ENCODE measurements at regions of chr2 and their contacts with region 1.

Region 1: GRCh38 chr2:126657636-126658318 is 1.8 kb downstream of the GYPC start:
- DNase-seq: peak; percentile 40 to 79 (median 73)
- ATAC-seq: peak; percentile 72
- H3K4me3 ChIP-seq: peak overlapping the region; percentile 99
- H3K4me3 Mint-ChIP-seq: peak overlapping the region; percentile 88 to 100 (median 96)
- H3K27ac ChIP-seq: peak overlapping the region; percentile 98
- H3K27ac Mint-ChIP-seq: peak overlapping the region; percentile 93 to 100 (median 98)
- H3K4me1 ChIP-seq: peaks cover 41 to 59% of the 10 kb centered on the region in 2 donors
- H3K4me1 Mint-ChIP-seq: peaks cover 50 to 78% (median 63%) of the 10 kb centered on the region in 7 donors
- H3K27me3 ChIP-seq: no peaks in the 10 kb centered on the region
- H3K27me3 Mint-ChIP-seq: no peaks in the 10 kb centered on the region

Region 2: DNA sequence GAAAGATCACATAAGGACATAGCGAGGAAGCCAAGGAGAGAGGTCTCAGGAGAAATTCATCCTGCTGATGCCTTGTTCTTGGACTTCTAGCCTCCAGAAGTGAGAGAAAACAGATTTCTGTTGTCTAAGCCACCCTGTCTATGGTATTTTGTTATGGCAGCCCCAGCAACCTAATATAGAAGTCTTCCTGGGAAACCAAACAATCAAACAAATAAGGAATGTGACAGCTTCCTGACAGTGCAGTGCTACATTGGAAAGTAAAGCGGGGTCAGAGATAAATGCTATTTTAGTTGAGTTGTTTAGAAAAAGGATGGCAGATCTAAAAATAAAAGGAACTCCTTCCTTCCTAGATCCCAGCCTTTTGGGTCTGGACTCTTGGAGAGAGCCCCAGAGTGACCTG is 445.0 kb before region 1 on chr2:
- CTCF ChIA-PET with region 1: no interaction called
- POLR2A ChIA-PET with region 1: no interaction called
- intact Hi-C with region 1: no loop called
- DNase-seq: no peak
- ATAC-seq: no peak
- H3K4me3 ChIP-seq: no peak overlapping the region
- H3K4me3 Mint-ChIP-seq: no peak overlapping the region
- H3K27ac ChIP-seq: no peak overlapping the region
- H3K27ac Mint-ChIP-seq: no peak overlapping the region
- H3K4me1 ChIP-seq: no peaks in the 10 kb centered on the region
- H3K4me1 Mint-ChIP-seq: no peaks in the 10 kb centered on the region
- H3K27me3 ChIP-seq: no peaks in the 10 kb centered on the region
- H3K27me3 Mint-ChIP-seq: peaks cover 0 to 16% (median 11%) of the 10 kb centered on the region in 5 donors

Region 3: GRCh38 chr2:126634273-126634861 is 23.4 kb before region 1 on chr2:
- CTCF ChIA-PET with region 1: interaction called, 3 read pairs
- POLR2A ChIA-PET with region 1: interaction called, 9 read pairs
- intact Hi-C with region 1: loop called in 1 of 2 experiments (anchors 1 kb)
- DNase-seq: peak in 7 of 9 donors; percentile 12 to 35 (median 21)
- ATAC-seq: peak; percentile 50
- H3K4me3 ChIP-seq: no peak overlapping the region
- H3K4me3 Mint-ChIP-seq: no peak overlapping the region
- H3K27ac ChIP-seq: no peak overlapping the region
- H3K27ac Mint-ChIP-seq: peak overlapping the region in 1 of 9 donors; percentile 33
- H3K4me1 ChIP-seq: no peaks in the 10 kb centered on the region
- H3K4me1 Mint-ChIP-seq: peaks cover 0 to 10% (median 4%) of the 10 kb centered on the region in 7 donors
- H3K27me3 ChIP-seq: peaks cover 0 to 3% of the 10 kb centered on the region in 2 donors
- H3K27me3 Mint-ChIP-seq: peaks cover 0 to 51% (median 0%) of the 10 kb centered on the region in 5 donors

Region 4: GRCh38 chr2:126699716-126700581 is 42.2 kb after region 1 on chr2:
- CTCF ChIA-PET with region 1: no interaction called
- POLR2A ChIA-PET with region 1: interaction called, 5 read pairs
- intact Hi-C with region 1: loop called (anchors 5 to 10 kb)
- DNase-seq: no peak
- ATAC-seq: no peak
- H3K4me3 ChIP-seq: no peak overlapping the region
- H3K4me3 Mint-ChIP-seq: no peak overlapping the region
- H3K27ac ChIP-seq: no peak overlapping the region
- H3K27ac Mint-ChIP-seq: peak overlapping the region in 6 of 9 donors; percentile 6 to 63 (median 42)
- H3K4me1 ChIP-seq: no peaks in the 10 kb centered on the region
- H3K4me1 Mint-ChIP-seq: peaks cover 0 to 17% (median 8%) of the 10 kb centered on the region in 7 donors
- H3K27me3 ChIP-seq: no peaks in the 10 kb centered on the region
- H3K27me3 Mint-ChIP-seq: no peaks in the 10 kb centered on the region

Region 5: GRCh38 chr2:126761981-126762878 is 104.5 kb after region 1 on chr2:
- CTCF ChIA-PET with region 1: no interaction called
- POLR2A ChIA-PET with region 1: interaction called, 5 read pairs
- intact Hi-C with region 1: loop called (anchors 1 to 2 kb)
- DNase-seq: peak in 7 of 9 donors; percentile 41 to 71 (median 59)
- ATAC-seq: peak; percentile 92
- H3K4me3 ChIP-seq: peak overlapping the region; percentile 42
- H3K4me3 Mint-ChIP-seq: peak overlapping the region; percentile 41 to 84 (median 71)
- H3K27ac ChIP-seq: peak overlapping the region; percentile 62
- H3K27ac Mint-ChIP-seq: peak overlapping the region; percentile 64 to 95 (median 89)
- H3K4me1 ChIP-seq: peaks cover 29 to 41% of the 10 kb centered on the region in 2 donors
- H3K4me1 Mint-ChIP-seq: peaks cover 39 to 87% (median 70%) of the 10 kb centered on the region in 7 donors
- H3K27me3 ChIP-seq: no peaks in the 10 kb centered on the region
- H3K27me3 Mint-ChIP-seq: peaks cover 0 to 30% (median 0%) of the 10 kb centered on the region in 5 donors

Region 6: GRCh38 chr2:127086990-127087790 is 429.4 kb after region 1 on chr2:
- CTCF ChIA-PET with region 1: no interaction called
- POLR2A ChIA-PET with region 1: no interaction called
- intact Hi-C with region 1: loop called (anchors 5 to 10 kb)
- DNase-seq: no peak
- ATAC-seq: peak; percentile 20
- H3K4me3 ChIP-seq: no peak overlapping the region
- H3K4me3 Mint-ChIP-seq: peak overlapping the region in 4 of 10 donors; percentile 10 to 34 (median 26)
- H3K27ac ChIP-seq: no peak overlapping the region
- H3K27ac Mint-ChIP-seq: peak overlapping the region in 8 of 9 donors; percentile 20 to 99 (median 62)
- H3K4me1 ChIP-seq: peaks cover 40 to 41% of the 10 kb centered on the region in 2 donors
- H3K4me1 Mint-ChIP-seq: peaks cover 34 to 56% (median 43%) of the 10 kb centered on the region in 7 donors
- H3K27me3 ChIP-seq: no peaks in the 10 kb centered on the region
- H3K27me3 Mint-ChIP-seq: peaks cover 0 to 9% (median 0%) of the 10 kb centered on the region in 5 donors

Region 7: GRCh38 chr2:128321784-128322714 is 1664.3 kb after region 1 on chr2:
- CTCF ChIA-PET with region 1: no interaction called
- POLR2A ChIA-PET with region 1: no interaction called
- intact Hi-C with region 1: loop called in 1 of 2 experiments (anchors 5 kb)
- DNase-seq: peak; percentile 58 to 87 (median 76)
- ATAC-seq: peak; percentile 76
- H3K4me3 ChIP-seq: peak overlapping the region; percentile 68
- H3K4me3 Mint-ChIP-seq: peak overlapping the region; percentile 70 to 92 (median 76)
- H3K27ac ChIP-seq: peak overlapping the region; percentile 64
- H3K27ac Mint-ChIP-seq: peak overlapping the region in 6 of 9 donors; percentile 28 to 80 (median 50)
- H3K4me1 ChIP-seq: peaks cover 10 to 18% of the 10 kb centered on the region in 2 donors
- H3K4me1 Mint-ChIP-seq: peaks cover 10 to 24% (median 14%) of the 10 kb centered on the region in 7 donors
- H3K27me3 ChIP-seq: no peaks in the 10 kb centered on the region
- H3K27me3 Mint-ChIP-seq: peaks cover 0 to 16% (median 0%) of the 10 kb centered on the region in 5 donors

Measured in naive thymus-derived CD4-positive, alpha-beta T cell (primary cell).